GM12878 (cell line): ENCODE measurements at regions of chr18 and their contacts with region 1.

Region 1: DNA sequence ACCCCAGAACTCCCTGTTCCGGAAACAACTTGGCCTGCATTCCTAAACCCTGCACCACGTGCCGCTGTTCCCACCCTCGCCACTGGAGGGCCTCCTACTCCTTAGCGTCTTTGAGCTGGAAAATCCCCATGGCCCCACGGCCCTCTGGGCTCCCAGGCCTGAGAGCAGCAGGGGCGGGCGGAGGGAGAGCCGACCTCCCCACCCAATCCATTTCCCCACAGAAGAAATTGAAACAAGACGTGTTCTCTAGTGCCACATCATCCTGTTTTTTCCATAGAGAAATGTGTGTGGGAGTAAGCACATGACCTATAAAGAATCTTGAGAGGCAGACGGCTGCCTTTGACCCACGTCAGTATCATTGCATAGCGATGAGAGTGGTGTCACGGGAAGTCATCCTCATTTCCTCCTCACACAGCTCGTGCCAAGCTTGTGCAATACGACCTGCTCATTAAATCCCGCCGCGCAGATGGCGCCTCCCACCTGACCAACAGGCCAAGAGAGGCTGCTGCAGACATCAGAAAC is 79.2 kb downstream of the LAMA1 start:
- DNase-seq: no peak
- ATAC-seq: peak; percentile 76
- H3K4me3 ChIP-seq: no peak overlapping the region
- H3K27ac ChIP-seq: no peak overlapping the region
- H3K4me1 ChIP-seq: no peaks in the 10 kb centered on the region
- H3K27me3 ChIP-seq: no peaks in the 10 kb centered on the region; a peak in 1 of 4 replicates
- CTCF ChIP-seq: peak; percentile 29 to 60 (median 53); a peak in 4 of 6 replicates
- EP300 ChIP-seq: no peak
- POLR2A ChIP-seq: no peak
- RAD21 ChIP-seq: no peak

Region 2: DNA sequence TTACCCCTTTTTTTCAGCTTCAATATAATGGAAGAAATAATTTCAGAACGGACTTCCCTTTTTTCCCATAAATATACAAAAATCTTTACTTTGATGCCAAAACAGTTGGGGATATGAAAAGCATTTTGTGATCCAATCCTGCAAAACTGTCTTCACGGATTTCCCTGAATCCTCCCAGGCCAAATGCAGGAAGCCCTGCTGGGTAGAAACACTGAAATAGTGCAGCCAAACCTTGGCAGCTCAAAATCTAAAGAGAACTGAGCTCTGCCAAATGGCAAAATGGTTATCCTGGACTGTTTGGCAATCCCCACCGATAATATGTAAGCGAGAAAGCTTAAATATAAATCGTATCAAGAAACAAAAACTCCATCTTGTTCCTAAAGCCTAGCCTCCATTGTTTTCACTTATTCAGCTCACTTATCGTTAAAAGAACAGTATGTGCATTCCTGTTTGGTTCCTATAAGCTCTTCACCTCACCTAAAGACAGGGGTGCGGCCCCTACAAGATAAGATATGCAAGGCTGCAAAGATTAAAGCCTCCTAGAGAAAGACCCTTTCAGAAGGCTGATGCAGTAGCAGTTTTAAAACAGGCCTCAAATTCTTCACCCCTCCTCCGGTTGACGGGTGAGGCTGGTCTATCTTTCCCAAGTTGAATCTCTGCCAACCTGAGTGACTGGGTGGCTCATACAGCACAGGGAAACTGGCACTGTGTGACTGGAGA is 30.6 kb after region 1 on chr18:
- CTCF ChIA-PET with region 1: no interaction called
- POLR2A ChIA-PET with region 1: no interaction called
- RAD21 ChIA-PET with region 1: no interaction called
- SMC1A ChIA-PET with region 1: no interaction called
- in situ Hi-C with region 1: no loop called
- intact Hi-C with region 1: no loop called
- DNase-seq: no peak
- ATAC-seq: no peak
- H3K4me3 ChIP-seq: no peak overlapping the region
- H3K27ac ChIP-seq: no peak overlapping the region
- H3K4me1 ChIP-seq: no peaks in the 10 kb centered on the region
- H3K27me3 ChIP-seq: no peaks in the 10 kb centered on the region; a peak in 1 of 4 replicates
- CTCF ChIP-seq: no peak
- EP300 ChIP-seq: no peak
- POLR2A ChIP-seq: no peak
- RAD21 ChIP-seq: no peak

Region 3: GRCh38 chr18:7177116-7177744 is 138.8 kb after region 1 on chr18:
- CTCF ChIA-PET with region 1: interaction called, 10 read pairs
- POLR2A ChIA-PET with region 1: no interaction called
- RAD21 ChIA-PET with region 1: interaction called, 4 read pairs
- SMC1A ChIA-PET with region 1: interaction called, 10 read pairs
- in situ Hi-C with region 1: no loop called
- intact Hi-C with region 1: loop called (anchors 1 kb)
- DNase-seq: no peak
- ATAC-seq: peak; percentile 78
- H3K4me3 ChIP-seq: no peak overlapping the region
- H3K27ac ChIP-seq: no peak overlapping the region
- H3K4me1 ChIP-seq: no peaks in the 10 kb centered on the region
- H3K27me3 ChIP-seq: no peaks in the 10 kb centered on the region
- CTCF ChIP-seq: peak; percentile 18 to 63 (median 39); a peak in 3 of 6 replicates
- EP300 ChIP-seq: no peak
- POLR2A ChIP-seq: no peak
- RAD21 ChIP-seq: 0 out of 2 replicates have a peak, but pooled peaks have one; percentile 7